Psoas muscle (tissue), 8 donors: ENCODE measurements at regions of chr17 and their contacts with region 1.

Region 1: DNA sequence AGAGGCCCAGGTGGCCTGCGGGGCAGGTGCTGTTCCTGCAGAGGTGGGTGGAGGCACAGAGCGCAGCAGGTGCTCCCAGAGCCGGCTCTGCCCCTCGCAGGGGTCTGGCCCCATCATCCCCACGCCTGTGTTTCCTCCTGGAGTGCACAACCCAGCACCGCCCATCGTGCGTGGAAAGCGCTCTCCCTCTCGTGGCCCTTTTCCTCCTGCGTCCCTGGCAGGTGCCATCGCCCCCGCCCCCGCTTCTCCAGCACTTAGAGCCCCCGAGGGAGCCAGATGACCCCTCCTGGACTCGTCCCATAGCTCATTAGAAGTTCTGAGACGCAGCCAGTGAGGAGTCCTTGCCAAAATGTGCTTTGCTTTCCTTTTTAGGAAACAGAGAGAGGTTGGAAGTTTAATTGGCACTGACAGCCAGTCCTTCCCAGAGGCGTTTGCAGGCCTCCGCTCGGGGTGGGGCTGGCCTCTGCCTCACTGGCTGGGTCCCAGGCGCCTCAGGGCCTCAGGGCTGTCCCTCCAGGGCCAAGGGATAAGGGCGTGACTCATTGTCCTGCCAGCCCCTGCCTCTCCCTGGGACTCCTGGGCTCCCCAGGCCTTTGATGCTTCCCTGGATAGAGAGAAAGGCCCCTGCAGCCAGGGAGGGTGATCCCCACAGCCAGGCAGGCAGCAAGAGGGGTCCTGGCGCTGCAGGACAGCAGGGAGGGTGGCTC is 32.2 kb upstream of the CHMP6 start:
- DNase-seq: peak; percentile 85 to 90
- ATAC-seq: peak; percentile 81 to 85 (median 84)
- H3K4me3 ChIP-seq: no peak overlapping the region
- H3K27ac ChIP-seq: peak overlapping the region; percentile 81
- H3K4me1 ChIP-seq: peaks cover 41% of the 10 kb centered on the region
- H3K27me3 ChIP-seq: no peaks in the 10 kb centered on the region
- CTCF ChIP-seq: no peak

Region 2: GRCh38 chr17:80876950-80877728 is 82.3 kb before region 1 on chr17:
- intact Hi-C with region 1: loop called in 1 of 2 experiments (anchors 5 kb)
- DNase-seq: peak in 1 of 2 donors; percentile 36
- ATAC-seq: no peak
- H3K4me3 ChIP-seq: no peak overlapping the region
- H3K27ac ChIP-seq: no peak overlapping the region
- H3K4me1 ChIP-seq: peaks cover 40% of the 10 kb centered on the region
- H3K27me3 ChIP-seq: no peaks in the 10 kb centered on the region
- CTCF ChIP-seq: no peak

Region 3: DNA sequence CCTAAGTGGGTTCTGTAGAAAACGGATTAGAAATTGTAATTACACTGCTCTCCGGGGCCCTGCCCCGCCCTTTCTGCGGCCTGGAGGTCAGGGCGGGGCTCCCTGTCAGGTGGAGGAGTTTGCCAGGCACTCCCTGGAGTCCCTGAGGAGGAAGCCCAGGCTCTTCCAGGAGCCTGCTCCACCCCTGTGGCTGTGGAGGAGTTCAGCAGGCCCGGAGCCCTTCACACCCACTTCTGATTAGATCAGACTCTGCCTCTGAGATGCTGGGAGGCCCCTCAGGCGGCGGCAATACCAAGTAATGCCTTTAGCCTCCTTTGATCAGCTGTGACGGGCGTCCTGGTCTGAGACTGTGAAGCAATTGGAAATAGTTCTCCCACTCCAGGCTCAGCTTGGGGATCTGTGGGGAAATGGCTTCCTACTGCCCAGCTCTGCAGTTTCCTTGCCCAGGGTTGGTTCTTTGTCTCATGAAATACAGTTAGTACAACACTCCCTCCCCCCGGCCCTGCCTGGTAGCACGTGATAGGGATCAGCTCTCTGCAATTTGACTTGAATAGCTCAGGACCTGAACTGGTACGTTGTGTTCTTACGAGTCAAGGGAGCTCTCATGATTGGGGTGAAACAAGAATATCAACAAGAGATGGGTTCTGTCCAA is 97.7 kb after region 1 on chr17:
- intact Hi-C with region 1: no loop called
- DNase-seq: peak in 1 of 2 donors; percentile 80
- ATAC-seq: peak; percentile 65 to 95 (median 89)
- H3K4me3 ChIP-seq: peak overlapping the region; percentile 11
- H3K27ac ChIP-seq: peak overlapping the region; percentile 58
- H3K4me1 ChIP-seq: peaks cover 9% of the 10 kb centered on the region
- H3K27me3 ChIP-seq: no peaks in the 10 kb centered on the region
- CTCF ChIP-seq: no peak